PC-9 (cell line): ENCODE measurements at regions of chr5 and their contacts with region 1.

Region 1: DNA sequence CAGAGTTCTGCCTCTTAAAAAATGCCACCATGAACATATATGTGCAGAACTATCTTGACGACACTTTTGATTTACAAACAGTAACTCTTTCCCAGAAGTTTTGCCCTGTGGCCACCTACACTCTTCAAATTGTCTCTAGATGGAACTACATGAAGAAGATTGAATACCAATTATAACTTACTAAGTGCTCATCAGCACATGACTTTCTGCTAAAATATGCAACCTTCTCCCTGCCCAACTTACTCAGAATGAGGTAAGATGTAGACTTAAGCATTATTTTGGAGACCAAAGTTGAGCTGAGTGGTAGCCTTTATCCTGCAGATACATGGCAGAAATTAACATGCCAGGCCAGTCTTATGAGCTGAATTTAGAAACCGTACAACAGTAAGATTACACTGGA is 105.4 kb downstream of the SEMA5A start:
- DNase-seq: peak in 1 of 2 experiments; percentile 62
- H3K4me3 ChIP-seq: no peak overlapping the region
- H3K27ac ChIP-seq: no peak overlapping the region
- H3K4me1 ChIP-seq: peaks cover 22% of the 10 kb centered on the region
- H3K27me3 ChIP-seq: no peaks in the 10 kb centered on the region
- CTCF ChIP-seq: no peak

Region 2: GRCh38 chr5:9288234-9288633 is 152.3 kb before region 1 on chr5:
- CTCF ChIA-PET with region 1: interaction called, 10 read pairs
- POLR2A ChIA-PET with region 1: no interaction called
- intact Hi-C with region 1: no loop called
- DNase-seq: no peak
- H3K4me3 ChIP-seq: no peak overlapping the region
- H3K27ac ChIP-seq: no peak overlapping the region
- H3K4me1 ChIP-seq: no peaks in the 10 kb centered on the region
- H3K27me3 ChIP-seq: no peaks in the 10 kb centered on the region
- CTCF ChIP-seq: no peak